ENCODE measurements at regions of chr10 and their contacts with region 1.

Region 1: GRCh38 chr10:3036155-3037021 is 31.0 kb upstream of the PFKP start:
- DNase-seq: no peak

Region 2: GRCh38 chr10:2938869-2939268 is 97.5 kb before region 1 on chr10:
- intact Hi-C with region 1: loop called in 1 of 2 experiments (anchors 10 kb)
- DNase-seq: no peak

Region 3: GRCh38 chr10:2968401-2969058 is 67.9 kb before region 1 on chr10:
- intact Hi-C with region 1: no loop called
- DNase-seq: no peak

Region 4: GRCh38 chr10:3025300-3025699 is 11.1 kb before region 1 on chr10:
- intact Hi-C with region 1: no loop called
- DNase-seq: no peak